Right cardiac atrium (tissue), 5 donors: ENCODE measurements at regions of chr16 and their contacts with region 1.

Region 1: DNA sequence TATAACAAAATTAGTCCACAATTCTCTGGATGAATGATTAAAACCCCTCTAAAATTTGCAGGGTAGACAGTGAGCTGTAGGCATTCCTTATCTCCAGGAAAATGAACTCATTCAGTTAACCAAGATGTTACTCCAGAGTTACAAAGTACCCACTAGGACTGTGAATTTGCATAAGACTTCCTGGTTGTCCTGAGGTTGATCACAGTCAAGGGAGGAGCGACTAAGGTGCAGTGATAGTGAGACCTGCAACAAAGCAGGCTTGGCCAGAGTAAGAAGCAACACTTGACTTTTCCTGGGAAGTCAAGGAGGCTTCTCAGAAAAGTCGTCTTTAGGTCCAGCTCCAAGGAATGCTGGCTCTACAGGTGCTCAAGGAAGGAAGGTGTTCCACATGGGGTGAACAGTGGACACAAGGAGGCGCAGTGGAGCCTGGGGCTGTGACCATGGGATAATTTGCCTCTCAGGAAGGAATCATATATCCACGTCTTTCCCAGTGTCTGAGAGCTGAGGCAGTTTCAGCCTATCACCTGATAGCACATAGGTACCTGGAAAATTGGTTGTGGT is 821.1 kb upstream of the EEF2KMT start:
- DNase-seq: no peak
- ATAC-seq: no peak
- H3K4me3 ChIP-seq: no peak overlapping the region
- H3K27ac ChIP-seq: no peak overlapping the region
- H3K4me1 ChIP-seq: no peaks in the 10 kb centered on the region
- H3K27me3 ChIP-seq: no peaks in the 10 kb centered on the region

Region 2: GRCh38 chr16:5851393-5851982 is 67.2 kb before region 1 on chr16:
- intact Hi-C with region 1: loop called in 1 of 4 experiments (anchors 10 kb)
- DNase-seq: no peak
- ATAC-seq: no peak
- H3K4me3 ChIP-seq: no peak overlapping the region
- H3K27ac ChIP-seq: no peak overlapping the region
- H3K4me1 ChIP-seq: no peaks in the 10 kb centered on the region
- H3K27me3 ChIP-seq: no peaks in the 10 kb centered on the region